ENCODE measurements at regions of chr15 and their contacts with region 1.

Region 1: GRCh38 chr15:72492733-72493132 is 18.6 kb downstream of the ARIH1 start:
- DNase-seq: no peak
- CTCF ChIP-seq: no peak

Region 2: DNA sequence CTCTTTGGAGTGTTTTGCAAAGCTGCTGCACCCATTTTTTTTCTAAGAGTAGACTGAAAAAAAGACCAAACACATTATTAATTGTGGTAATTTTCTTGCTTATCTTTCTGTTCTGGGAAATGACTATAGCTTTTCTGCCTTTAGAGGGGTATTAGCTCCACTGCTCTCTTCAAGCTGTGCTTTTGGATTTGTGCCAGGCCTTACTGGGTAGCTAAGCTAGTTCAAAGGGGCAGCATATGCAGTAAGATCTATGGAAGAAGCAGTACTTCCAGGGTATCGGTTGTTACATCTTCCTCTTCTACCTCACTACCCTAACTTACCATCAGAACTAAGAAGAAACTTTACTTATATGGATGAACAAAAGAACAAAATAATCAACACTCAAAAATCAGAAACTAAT is 47.3 kb before region 1 on chr15:
- CTCF ChIA-PET with region 1: no interaction called
- POLR2A ChIA-PET with region 1: no interaction called
- DNase-seq: no peak
- CTCF ChIP-seq: no peak

Region 3: GRCh38 chr15:72482275-72482674 is 10.5 kb before region 1 on chr15:
- CTCF ChIA-PET with region 1: interaction called, 26 read pairs
- POLR2A ChIA-PET with region 1: interaction called, 4 read pairs
- DNase-seq: no peak
- CTCF ChIP-seq: no peak